CD14-positive monocyte (primary cell): ENCODE measurements at regions of chr19 and their contacts with region 1.

Region 1: DNA sequence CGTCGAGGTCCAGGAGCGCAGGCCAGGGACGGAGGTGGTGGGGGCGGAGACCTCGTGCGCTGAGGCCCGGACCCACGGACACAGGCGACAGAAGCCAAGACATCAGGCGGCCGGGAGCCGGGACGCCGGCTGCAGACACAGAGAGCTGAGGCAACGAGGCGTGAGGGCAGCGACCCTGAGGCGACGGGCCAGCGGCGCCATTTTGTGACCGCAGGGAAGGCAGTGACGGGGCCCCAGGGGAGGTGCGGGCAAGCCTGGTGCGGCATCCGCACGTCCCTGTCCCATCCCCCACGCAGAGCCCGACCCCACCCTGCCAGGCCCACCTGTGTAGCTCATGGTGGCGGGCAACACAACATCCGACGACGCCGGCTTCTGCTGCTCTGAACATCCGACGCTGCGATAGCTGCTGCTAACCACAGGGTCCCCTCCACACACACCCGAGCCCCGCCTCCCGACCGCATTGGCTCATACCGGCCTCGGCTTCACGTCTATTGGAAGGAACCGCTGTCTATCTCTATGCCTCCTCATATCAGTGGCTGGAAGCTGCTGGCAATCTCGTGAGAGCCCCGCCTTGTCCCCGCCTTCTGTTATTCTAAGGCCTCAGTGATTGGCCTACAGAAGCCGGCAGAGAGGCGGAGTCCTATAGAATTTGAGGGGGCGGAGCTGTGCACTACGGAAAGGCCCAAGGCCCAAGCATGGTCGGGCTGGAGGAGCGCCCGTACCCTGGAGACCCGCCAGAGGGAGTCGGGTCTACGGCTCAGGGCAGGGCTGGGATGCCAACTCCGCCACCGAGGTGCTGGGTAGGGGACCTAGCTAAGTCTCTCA is at the start of gene AKAP8L:
- DNase-seq: peak; percentile 99 to 100 (median 99)
- H3K4me3 ChIP-seq: peak within 1 kb of the TSS; percentile 86 to 97 (median 97)
- H3K4me3 Mint-ChIP-seq: peak within 1 kb of the TSS; percentile 97 to 99
- H3K27ac ChIP-seq: peak within 1 kb of the TSS; percentile 55 to 92
- H3K27ac Mint-ChIP-seq: peak within 1 kb of the TSS; percentile 90 to 99 (median 97)
- H3K4me1 ChIP-seq: peaks cover 19 to 26% of the 10 kb centered on the region in 2 donors
- H3K4me1 Mint-ChIP-seq: peaks cover 31% of the 10 kb centered on the region
- H3K27me3 ChIP-seq: no peaks in the 10 kb centered on the region
- H3K27me3 Mint-ChIP-seq: no peaks in the 10 kb centered on the region
- CTCF ChIP-seq: peak; percentile 77
- polyA plus RNA-seq, gene AKAP8L: 21.4 to 103 (median 39.0) TPM

Region 2: DNA sequence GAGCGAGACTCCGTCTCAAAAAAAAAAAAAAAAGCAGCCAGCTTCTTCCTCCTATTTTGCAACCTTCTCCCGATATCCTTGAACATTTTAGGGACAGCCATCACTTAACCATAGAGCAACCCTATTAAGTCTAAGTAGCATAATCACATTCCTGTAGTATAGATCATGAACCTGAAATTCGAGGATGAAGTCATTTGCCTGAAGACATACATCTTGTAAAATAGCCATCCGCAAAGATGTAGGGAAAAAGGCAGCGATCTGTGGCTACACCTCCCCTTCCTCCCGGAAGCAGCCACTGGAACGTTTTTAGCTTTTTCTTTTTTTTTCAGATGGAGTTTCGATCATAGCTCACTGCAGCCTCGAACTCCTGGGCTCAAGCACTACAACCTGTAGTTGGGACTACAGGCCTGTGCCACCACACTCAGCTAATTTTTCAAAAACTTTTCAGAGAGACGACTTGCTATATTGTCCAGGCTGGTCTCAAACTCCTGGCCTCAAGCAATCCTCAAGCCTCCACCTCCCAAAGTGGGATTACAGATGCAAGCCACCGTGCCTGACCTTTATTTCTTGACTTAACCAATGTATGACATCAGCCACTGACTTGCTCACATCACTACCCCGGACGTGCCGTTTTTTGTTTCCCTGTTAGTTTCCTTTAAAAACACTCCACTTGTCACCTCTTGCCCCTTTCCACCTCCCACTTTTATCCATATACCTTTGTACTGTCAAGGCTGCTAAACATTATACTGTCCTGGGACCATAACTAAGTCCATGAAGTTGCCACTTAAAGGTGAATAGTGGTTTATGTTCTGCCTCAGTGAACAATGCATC is 184.5 kb before region 1 on chr19:
- intact Hi-C with region 1: no loop called
- DNase-seq: no peak
- H3K4me3 ChIP-seq: peak overlapping the region in 1 of 3 experiments; percentile 72
- H3K4me3 Mint-ChIP-seq: peak overlapping the region in 1 of 2 donors; percentile 85
- H3K27ac ChIP-seq: no peak overlapping the region
- H3K27ac Mint-ChIP-seq: peak overlapping the region in 4 of 7 donors; percentile 60 to 87 (median 79)
- H3K4me1 ChIP-seq: peaks cover 30 to 34% of the 10 kb centered on the region in 2 donors
- H3K4me1 Mint-ChIP-seq: peaks cover 35% of the 10 kb centered on the region
- H3K27me3 ChIP-seq: peaks cover 17 to 28% of the 10 kb centered on the region in 2 donors
- H3K27me3 Mint-ChIP-seq: peaks cover 28 to 46% (median 42%) of the 10 kb centered on the region in 3 donors
- CTCF ChIP-seq: no peak

Region 3: DNA sequence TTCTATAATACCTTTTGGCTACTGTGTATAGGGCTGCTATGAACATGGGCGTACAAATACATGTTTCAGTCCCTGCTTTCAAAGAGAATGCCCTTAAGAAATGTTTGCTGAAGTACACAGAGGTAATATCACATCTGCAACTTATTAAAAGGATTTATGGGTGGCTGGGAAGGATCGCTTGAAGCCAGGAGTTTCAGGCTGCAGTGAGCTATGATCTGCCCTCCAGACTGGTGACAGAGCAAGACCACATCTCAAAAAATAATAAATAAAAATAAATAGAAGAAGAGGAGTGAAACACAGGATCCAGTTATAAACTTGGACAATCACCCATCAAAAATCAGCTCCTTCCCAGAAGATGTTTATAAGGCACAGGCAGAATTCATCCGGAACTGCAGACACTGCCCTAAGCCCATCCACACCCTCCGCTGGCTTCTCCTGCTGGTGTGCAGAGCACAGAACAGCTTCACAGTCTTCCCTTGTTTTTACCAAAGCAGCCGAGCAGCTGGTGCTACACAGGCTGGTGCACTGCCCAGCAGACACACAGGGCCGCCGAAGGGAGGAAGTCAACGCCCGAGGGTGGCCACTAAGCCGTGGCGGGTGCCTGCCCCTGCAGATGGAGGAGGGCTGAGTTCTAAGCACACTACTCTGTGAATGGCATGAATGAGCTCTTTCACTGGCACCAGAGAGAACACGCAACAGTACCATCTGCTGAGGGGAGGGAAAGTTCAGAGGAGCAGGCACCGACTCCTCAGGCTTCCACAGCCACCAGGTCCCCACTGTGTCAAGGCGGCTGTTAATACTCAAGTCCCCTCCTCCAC is 130.4 kb before region 1 on chr19:
- intact Hi-C with region 1: no loop called
- DNase-seq: no peak
- H3K4me3 ChIP-seq: no peak overlapping the region
- H3K4me3 Mint-ChIP-seq: no peak overlapping the region
- H3K27ac ChIP-seq: peak overlapping the region in 1 of 2 donors; percentile 34
- H3K27ac Mint-ChIP-seq: peak overlapping the region in 3 of 7 donors; percentile 21 to 75 (median 64)
- H3K4me1 ChIP-seq: peaks cover 29 to 42% of the 10 kb centered on the region in 2 donors
- H3K4me1 Mint-ChIP-seq: peaks cover 77% of the 10 kb centered on the region
- H3K27me3 ChIP-seq: no peaks in the 10 kb centered on the region
- H3K27me3 Mint-ChIP-seq: peaks cover 0 to 3% (median 2%) of the 10 kb centered on the region in 3 donors
- CTCF ChIP-seq: no peak

Region 4: GRCh38 chr19:15449620-15450527 is 31.1 kb after region 1 on chr19 and contains the start of gene WIZ:
- intact Hi-C with region 1: loop called (anchors 1 to 2 kb)
- DNase-seq: peak; percentile 53 to 72 (median 58)
- H3K4me3 ChIP-seq: peak within 1 kb of the TSS; percentile 43 to 76 (median 57)
- H3K4me3 Mint-ChIP-seq: peak within 1 kb of the TSS; percentile 73 to 79
- H3K27ac ChIP-seq: peak within 1 kb of the TSS; percentile 46 to 75
- H3K27ac Mint-ChIP-seq: peak within 1 kb of the TSS; percentile 84 to 94 (median 92)
- H3K4me1 ChIP-seq: peaks cover 11 to 12% of the 10 kb centered on the region in 2 donors
- H3K4me1 Mint-ChIP-seq: peaks cover 15% of the 10 kb centered on the region
- H3K27me3 ChIP-seq: no peaks in the 10 kb centered on the region
- H3K27me3 Mint-ChIP-seq: peaks cover 0 to 5% (median 0%) of the 10 kb centered on the region in 3 donors
- CTCF ChIP-seq: no peak
- polyA plus RNA-seq, gene WIZ: 0.47 to 13.7 (median 0.51) TPM